Ovary (tissue), 10 donors: ENCODE measurements at regions of chr20 and their contacts with region 1.

Region 1: DNA sequence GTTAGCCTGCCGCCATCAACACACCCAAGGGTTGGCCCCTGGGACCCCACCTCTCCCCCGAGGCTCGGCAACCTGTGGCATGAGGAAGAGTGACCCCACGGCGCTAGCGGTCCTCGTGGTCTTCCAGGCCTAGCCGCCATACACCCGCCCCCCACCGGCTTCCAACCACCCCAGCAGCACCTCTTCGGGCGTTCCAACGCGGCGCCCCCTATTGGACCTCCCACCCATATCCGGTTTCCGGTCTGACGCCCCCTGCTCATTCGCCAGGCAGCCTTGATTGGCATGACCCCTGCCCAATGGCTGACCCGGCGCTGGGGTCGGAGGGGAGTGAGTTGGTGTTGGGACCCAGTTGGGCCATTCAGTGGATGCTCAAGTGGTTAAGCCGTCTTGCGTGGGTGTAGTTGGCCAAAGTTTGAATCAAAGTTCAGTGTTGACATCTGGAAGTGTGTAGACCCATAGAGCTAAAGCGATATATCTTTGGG is at the start of gene GNAS-AS1:
- DNase-seq: peak in 4 of 5 donors; percentile 25 to 73 (median 56)
- H3K4me3 ChIP-seq: peak within 1 kb of the TSS; percentile 40
- H3K27ac ChIP-seq: no peak within 1 kb of the TSS
- H3K4me1 ChIP-seq: no peaks in the 10 kb centered on the region
- H3K27me3 ChIP-seq: no peaks in the 10 kb centered on the region
- CTCF ChIP-seq: no peak
- EP300 ChIP-seq: no peak
- POLR2A ChIP-seq: no peak
- total RNA-seq, gene GNAS-AS1: 0.12 to 0.37 (median 0.18) TPM in 5 of 7 donors, not detected in the others

Region 2: GRCh38 chr20:58236612-58237330 is 614.0 kb before region 1 on chr20:
- intact Hi-C with region 1: loop called in 1 of 4 experiments (anchors 10 kb)
- DNase-seq: peak; percentile 54 to 84 (median 76)
- H3K4me3 ChIP-seq: peak overlapping the region; percentile 8
- H3K27ac ChIP-seq: no peak overlapping the region
- H3K4me1 ChIP-seq: no peaks in the 10 kb centered on the region
- H3K27me3 ChIP-seq: no peaks in the 10 kb centered on the region
- CTCF ChIP-seq: peak; percentile 77 to 87 (median 84)
- EP300 ChIP-seq: no peak
- POLR2A ChIP-seq: peak; percentile 10